Activated CD4-positive, alpha-beta T cell treated with anti-CD3 and anti-CD28 coated beads for 36 hours (primary cell): ENCODE measurements at regions of chr14 and their contacts with region 1.

Region 1: DNA sequence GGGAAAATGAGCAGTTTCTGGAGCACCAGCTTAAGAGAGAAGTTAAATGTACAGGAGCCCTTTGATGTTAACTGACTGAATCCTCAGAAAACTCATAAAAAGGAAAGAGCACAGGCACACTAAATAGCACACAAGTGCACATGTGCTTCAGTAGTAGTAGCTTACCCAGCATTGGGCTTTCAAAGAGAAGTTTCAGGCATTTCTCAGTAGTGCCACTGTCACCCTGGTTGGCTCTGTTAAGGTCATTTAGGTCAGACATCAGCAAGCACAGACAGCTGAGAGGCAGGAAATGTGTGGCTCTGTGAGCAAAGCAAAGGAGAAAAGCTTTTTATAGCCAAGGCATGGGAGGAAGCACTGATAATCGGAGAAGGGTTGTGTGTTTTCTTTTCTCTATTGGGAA is 96.3 kb upstream of the HIF1A start:
- DNase-seq: peak; percentile 47
- ATAC-seq: peak; percentile 49
- H3K4me3 Mint-ChIP-seq: no peak overlapping the region
- H3K27ac Mint-ChIP-seq: peak overlapping the region; percentile 59
- H3K4me1 Mint-ChIP-seq: peaks cover 55% of the 10 kb centered on the region
- H3K27me3 Mint-ChIP-seq: no peaks in the 10 kb centered on the region

Region 2: GRCh38 chr14:61503167-61503801 is 95.7 kb before region 1 on chr14:
- CTCF ChIA-PET with region 1: interaction called, 3 read pairs
- POLR2A ChIA-PET with region 1: no interaction called
- intact Hi-C with region 1: loop called (anchors 1 kb)
- DNase-seq: peak; percentile 90
- ATAC-seq: peak; percentile 80
- H3K4me3 Mint-ChIP-seq: peak overlapping the region; percentile 56
- H3K27ac Mint-ChIP-seq: peak overlapping the region; percentile 99
- H3K4me1 Mint-ChIP-seq: peaks cover 98% of the 10 kb centered on the region
- H3K27me3 Mint-ChIP-seq: no peaks in the 10 kb centered on the region

Region 3: DNA sequence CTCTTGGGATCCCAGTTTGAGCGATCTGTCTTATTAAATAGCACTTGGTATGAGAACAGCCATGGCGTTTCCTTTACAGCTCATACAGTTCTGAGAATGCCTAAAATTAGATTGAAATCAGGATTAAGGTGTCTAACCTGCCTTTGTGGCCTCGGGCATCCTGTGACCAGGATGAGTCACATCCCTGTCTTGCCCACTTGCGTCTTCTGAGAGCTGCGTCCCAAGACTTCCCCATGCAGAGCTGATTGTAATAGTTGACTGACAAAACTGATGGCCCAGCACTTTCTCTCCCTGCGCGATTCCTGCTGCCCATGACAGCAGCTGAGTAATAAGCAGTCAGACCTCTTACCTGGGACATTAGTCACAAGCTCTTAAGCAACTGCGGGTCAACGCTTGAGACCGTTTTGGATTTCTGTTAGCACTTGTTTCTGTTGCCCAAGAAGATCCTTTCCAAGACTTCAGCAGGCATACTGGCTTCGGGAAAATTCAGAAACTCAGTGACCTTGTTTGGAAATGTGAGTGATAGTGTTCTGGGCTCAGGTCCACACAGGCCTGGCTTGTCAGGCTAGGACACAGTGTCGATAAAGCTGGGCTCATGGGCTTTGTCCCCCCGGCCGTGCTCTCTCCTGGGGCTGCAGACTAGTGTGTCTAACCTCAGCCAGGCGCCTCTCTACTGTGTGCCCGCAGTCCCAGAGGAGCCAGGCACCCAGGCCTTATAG is 73.5 kb before region 1 on chr14:
- CTCF ChIA-PET with region 1: no interaction called
- POLR2A ChIA-PET with region 1: no interaction called
- intact Hi-C with region 1: loop called (anchors 2 to 5 kb)
- DNase-seq: peak; percentile 86
- ATAC-seq: peak; percentile 84
- H3K4me3 Mint-ChIP-seq: peak overlapping the region; percentile 6
- H3K27ac Mint-ChIP-seq: peak overlapping the region; percentile 86
- H3K4me1 Mint-ChIP-seq: peaks cover 87% of the 10 kb centered on the region
- H3K27me3 Mint-ChIP-seq: no peaks in the 10 kb centered on the region

Region 4: GRCh38 chr14:61561657-61562276 is 37.2 kb before region 1 on chr14:
- CTCF ChIA-PET with region 1: interaction called, 3 read pairs
- POLR2A ChIA-PET with region 1: no interaction called
- intact Hi-C with region 1: loop called in 1 of 2 experiments (anchors 2 kb)
- DNase-seq: no peak
- ATAC-seq: no peak
- H3K4me3 Mint-ChIP-seq: no peak overlapping the region
- H3K27ac Mint-ChIP-seq: peak overlapping the region; percentile 81
- H3K4me1 Mint-ChIP-seq: peaks cover 62% of the 10 kb centered on the region
- H3K27me3 Mint-ChIP-seq: no peaks in the 10 kb centered on the region

Region 5: DNA sequence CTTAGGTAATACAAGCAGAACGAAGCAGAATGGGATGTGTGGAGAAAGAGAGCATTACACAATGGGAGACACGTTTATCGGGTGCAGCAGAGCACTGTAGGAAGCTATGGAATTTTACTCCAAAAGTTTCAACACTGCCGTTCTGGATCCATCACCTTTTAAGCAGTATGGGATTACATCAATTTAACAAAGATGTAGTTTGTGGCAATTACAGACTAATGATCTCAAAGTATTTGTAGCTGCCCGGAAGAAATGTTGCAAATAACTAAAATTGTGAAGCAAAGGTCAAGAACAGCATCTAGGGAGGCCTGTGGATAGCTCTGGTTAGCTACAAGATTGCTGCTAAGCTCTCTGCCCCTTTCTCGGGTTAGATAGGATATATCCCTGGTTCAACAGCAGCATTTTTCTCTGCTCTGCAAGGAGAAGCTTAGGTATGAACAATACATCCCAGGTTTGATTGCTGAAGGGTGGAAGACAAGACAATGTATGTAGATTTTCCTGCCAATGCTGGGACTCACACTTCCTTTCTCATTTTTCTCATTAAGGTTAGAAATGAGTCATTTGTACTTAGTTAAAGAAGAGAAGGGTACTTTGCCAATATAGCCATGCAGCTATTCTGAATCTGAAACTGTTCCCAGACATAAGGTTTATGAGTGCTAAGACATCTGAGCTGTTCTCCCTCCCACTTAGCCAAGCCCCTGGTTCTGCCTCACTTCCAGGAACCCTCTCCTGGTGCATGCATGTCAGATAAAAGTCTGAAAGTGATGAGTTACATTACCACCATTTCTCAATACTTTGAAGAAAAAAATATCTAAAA is 21.4 kb after region 1 on chr14:
- CTCF ChIA-PET with region 1: interaction called, 7 read pairs
- POLR2A ChIA-PET with region 1: interaction called, 5 read pairs
- intact Hi-C with region 1: loop called (anchors 1 kb)
- DNase-seq: peak; percentile 82
- ATAC-seq: peak; percentile 91
- H3K4me3 Mint-ChIP-seq: no peak overlapping the region
- H3K27ac Mint-ChIP-seq: peak overlapping the region; percentile 81
- H3K4me1 Mint-ChIP-seq: peaks cover 79% of the 10 kb centered on the region
- H3K27me3 Mint-ChIP-seq: no peaks in the 10 kb centered on the region

Region 6: GRCh38 chr14:61678975-61679374 is 80.0 kb after region 1 on chr14:
- CTCF ChIA-PET with region 1: no interaction called
- POLR2A ChIA-PET with region 1: no interaction called
- intact Hi-C with region 1: no loop called
- DNase-seq: no peak
- ATAC-seq: no peak
- H3K4me3 Mint-ChIP-seq: no peak overlapping the region
- H3K27ac Mint-ChIP-seq: no peak overlapping the region
- H3K4me1 Mint-ChIP-seq: peaks cover 7% of the 10 kb centered on the region
- H3K27me3 Mint-ChIP-seq: no peaks in the 10 kb centered on the region